ENCODE measurements at regions of chr3 and their contacts with region 1.

Region 1: GRCh38 chr3:186162221-186162620 is 53.3 kb upstream of the ETV5 start:
- DNase-seq: no peak
- ATAC-seq: no peak
- H3K4me3 ChIP-seq: no peak overlapping the region
- H3K27ac ChIP-seq: no peak overlapping the region
- H3K4me1 ChIP-seq: no peaks in the 10 kb centered on the region
- H3K27me3 ChIP-seq: peaks cover 21% of the 10 kb centered on the region
- CTCF ChIP-seq: no peak

Region 2: DNA sequence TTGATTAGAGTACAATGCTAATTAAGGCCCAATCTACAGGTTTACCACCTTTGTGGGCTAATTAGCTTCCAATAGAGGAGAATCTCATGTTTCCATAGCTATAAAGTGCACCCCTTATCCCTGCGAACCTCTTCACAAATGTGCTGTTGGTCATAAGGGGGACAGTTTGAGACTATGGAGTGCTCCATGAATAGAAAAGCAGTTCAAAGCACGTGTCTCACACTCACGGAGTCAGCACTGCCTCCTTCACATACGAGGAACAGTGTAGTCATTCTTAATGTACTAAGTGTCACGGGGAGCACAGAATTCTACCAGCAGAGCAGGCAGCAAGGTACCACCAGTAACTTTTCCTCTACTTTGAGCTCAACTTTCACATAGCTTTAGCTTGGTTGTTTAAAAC is 115.4 kb before region 1 on chr3:
- CTCF ChIA-PET with region 1: no interaction called
- POLR2A ChIA-PET with region 1: interaction called, 12 read pairs
- in situ Hi-C with region 1: no loop called
- intact Hi-C with region 1: no loop called
- DNase-seq: no peak
- ATAC-seq: no peak
- H3K4me3 ChIP-seq: no peak overlapping the region
- H3K27ac ChIP-seq: no peak overlapping the region
- H3K4me1 ChIP-seq: no peaks in the 10 kb centered on the region
- H3K27me3 ChIP-seq: no peaks in the 10 kb centered on the region
- CTCF ChIP-seq: no peak

Region 3: DNA sequence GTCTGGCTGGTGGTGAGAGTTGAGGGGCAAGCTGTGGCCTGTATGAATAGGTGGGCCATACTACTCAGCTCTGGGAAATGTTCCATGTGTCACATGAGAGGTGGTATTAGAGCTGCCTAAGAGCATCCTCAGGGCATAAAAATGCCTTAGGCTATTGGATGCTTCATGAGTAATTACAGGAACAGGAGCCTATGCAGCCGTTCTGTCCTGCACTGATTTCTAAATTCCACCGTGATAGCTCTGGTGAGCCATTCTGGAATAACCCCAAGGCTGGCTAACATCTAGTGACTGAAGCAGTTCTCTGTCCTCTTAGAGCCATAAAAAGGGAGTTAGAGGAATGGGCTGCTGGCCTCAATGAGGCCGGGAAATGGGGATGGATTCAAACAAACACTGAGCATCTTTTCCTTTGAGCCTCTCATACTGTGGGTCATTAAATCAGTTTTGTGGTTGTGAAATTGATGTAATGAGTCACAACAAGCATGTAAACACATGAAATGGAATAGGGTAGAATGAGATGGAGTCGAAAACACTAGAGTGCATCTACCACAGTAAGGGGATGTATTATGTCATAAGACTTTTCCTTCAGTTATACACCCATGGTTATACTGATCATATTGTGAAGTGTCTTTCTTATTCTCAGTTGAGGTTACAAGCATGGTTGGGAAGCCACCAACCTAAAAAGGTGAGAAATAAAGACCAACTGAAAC is 158.8 kb after region 1 on chr3:
- CTCF ChIA-PET with region 1: no interaction called
- POLR2A ChIA-PET with region 1: no interaction called
- in situ Hi-C with region 1: no loop called
- intact Hi-C with region 1: no loop called
- DNase-seq: no peak
- ATAC-seq: no peak
- H3K4me3 ChIP-seq: no peak overlapping the region
- H3K27ac ChIP-seq: no peak overlapping the region
- H3K4me1 ChIP-seq: no peaks in the 10 kb centered on the region
- H3K27me3 ChIP-seq: peaks cover 7% of the 10 kb centered on the region; the same call in 1 of the 2 replicates
- CTCF ChIP-seq: no peak